A549 (cell line): ENCODE measurements at regions of chr3 and their contacts with region 1.

Region 1: DNA sequence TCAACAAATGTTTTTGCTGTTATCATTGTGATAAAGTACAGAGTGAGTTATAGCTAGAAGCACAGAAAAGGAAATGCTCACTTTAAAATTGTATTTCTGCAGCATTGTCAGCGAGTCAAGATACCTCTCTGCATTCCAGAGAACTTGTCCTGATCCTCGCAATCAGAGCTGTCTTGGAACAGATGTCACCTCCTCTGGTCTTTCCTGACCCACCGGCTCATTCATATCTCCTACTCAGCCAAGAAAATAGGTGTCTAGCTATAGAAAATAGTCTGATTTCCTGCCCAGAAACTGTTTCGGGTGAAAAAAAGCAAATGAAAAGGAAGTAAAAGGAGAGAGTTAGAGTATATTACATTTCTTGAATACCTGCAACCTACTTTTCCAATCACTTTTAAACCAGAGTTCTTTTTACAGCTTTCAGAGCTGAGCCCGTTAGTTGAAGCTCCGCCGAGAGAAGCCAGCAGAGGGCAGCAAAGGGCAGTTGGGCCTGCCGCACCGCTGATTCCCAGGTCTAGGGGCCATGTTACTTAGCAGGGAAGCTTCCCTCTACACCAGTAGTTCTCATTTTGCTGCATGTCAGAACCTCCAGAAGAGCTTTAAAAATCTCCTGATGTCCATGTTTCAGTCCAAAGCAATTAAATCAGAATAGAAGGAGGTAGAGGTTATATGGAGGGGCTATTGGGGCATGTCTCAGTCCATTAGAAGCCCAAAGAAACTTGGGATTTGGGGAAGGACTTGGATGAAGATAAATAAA is 185.7 kb upstream of the THRB start:
- DNase-seq: peak; percentile 53 to 58
- ATAC-seq: peak; percentile 83 to 95
- H3K4me3 ChIP-seq: no peak overlapping the region
- H3K27ac ChIP-seq: no peak overlapping the region
- H3K4me1 ChIP-seq: peaks cover 17% of the 10 kb centered on the region
- CTCF ChIP-seq: peak; percentile 75
- EP300 ChIP-seq: no peak
- POLR2A ChIP-seq: no peak
- RAD21 ChIP-seq: peak; percentile 62 to 63

Region 2: GRCh38 chr3:24191801-24192403 is 488.5 kb before region 1 on chr3:
- CTCF ChIA-PET with region 1: interaction called, 10 read pairs
- POLR2A ChIA-PET with region 1: no interaction called
- DNase-seq: no peak
- ATAC-seq: no peak
- H3K4me3 ChIP-seq: no peak overlapping the region
- H3K27ac ChIP-seq: no peak overlapping the region
- H3K4me1 ChIP-seq: no peaks in the 10 kb centered on the region
- CTCF ChIP-seq: no peak
- EP300 ChIP-seq: no peak
- POLR2A ChIP-seq: no peak
- RAD21 ChIP-seq: no peak

Region 3: DNA sequence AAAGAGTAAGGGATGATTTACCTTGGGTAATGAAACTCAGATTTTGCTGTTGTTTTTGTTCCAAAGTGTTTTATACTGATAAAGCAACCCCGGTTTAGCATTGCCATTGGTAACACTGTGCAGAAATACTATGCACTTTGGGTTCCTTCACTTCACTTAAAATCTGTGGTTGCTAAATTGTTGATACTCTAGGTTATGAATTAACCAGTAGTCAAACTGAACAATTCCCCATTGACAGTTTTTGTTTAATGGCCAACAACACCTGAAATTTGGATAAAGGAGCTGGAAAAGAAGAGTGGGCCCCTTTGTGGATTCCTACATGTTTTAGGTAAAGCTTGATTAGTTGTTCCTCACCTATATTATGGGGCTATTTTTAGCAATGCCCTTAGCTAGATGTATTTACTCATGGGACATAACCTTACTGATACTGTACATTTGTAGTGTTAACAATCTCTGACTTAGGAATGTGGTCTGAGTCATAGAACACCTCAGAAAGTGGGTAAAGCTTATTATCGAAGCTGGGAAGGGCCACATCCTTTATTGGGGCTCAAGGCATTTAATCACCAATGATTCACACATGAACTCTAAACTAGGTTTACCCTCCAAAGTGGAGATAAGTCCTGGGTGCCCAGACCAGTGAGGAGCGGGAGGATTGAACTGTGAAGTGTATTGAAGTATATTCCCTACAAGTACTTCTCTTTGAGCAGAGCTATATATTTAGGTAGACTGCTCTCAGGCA is 156.2 kb before region 1 on chr3:
- CTCF ChIA-PET with region 1: interaction called, 11 read pairs
- POLR2A ChIA-PET with region 1: no interaction called
- DNase-seq: no peak
- ATAC-seq: no peak
- H3K4me3 ChIP-seq: no peak overlapping the region
- H3K27ac ChIP-seq: no peak overlapping the region
- H3K4me1 ChIP-seq: peaks cover 20% of the 10 kb centered on the region
- CTCF ChIP-seq: no peak
- EP300 ChIP-seq: no peak
- POLR2A ChIP-seq: no peak
- RAD21 ChIP-seq: no peak

Region 4: DNA sequence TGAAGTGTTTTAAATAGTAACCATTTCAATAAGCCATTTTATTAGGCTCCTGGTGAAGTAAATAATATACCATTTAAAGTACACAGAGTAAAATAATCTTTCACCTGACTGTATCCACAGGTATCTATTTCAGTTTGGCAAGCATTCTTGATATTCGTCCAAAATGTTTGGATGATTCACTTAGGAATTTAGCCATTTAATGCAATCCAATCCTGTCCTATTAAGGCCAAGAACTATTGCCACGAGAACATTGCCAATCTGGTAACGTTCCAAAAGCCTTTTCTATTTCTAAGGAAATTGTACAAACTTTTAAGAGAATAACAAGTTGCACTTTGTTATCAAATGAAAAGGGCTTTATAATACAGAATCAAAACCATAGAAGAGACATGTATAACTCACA is 24.1 kb after region 1 on chr3:
- CTCF ChIA-PET with region 1: interaction called, 21 read pairs
- POLR2A ChIA-PET with region 1: no interaction called
- DNase-seq: peak in 1 of 2 experiments; percentile 5
- ATAC-seq: 0 out of 6 replicates have a peak, but pooled peaks of 1 of the 2 experiments have one; percentile 47
- H3K4me3 ChIP-seq: no peak overlapping the region
- H3K27ac ChIP-seq: no peak overlapping the region
- H3K4me1 ChIP-seq: peaks cover 3% of the 10 kb centered on the region; the same call in 1 of the 3 replicates
- CTCF ChIP-seq: no peak
- EP300 ChIP-seq: no peak
- POLR2A ChIP-seq: no peak
- RAD21 ChIP-seq: no peak

Region 5: GRCh38 chr3:24863215-24863614 is 182.8 kb after region 1 on chr3:
- CTCF ChIA-PET with region 1: no interaction called
- POLR2A ChIA-PET with region 1: no interaction called
- DNase-seq: no peak
- ATAC-seq: no peak
- H3K4me3 ChIP-seq: no peak overlapping the region
- H3K27ac ChIP-seq: no peak overlapping the region
- H3K4me1 ChIP-seq: no peaks in the 10 kb centered on the region
- CTCF ChIP-seq: no peak
- EP300 ChIP-seq: no peak
- POLR2A ChIP-seq: no peak
- RAD21 ChIP-seq: no peak